ENCODE measurements at regions of chr4 and their contacts with region 1.

Region 1: GRCh38 chr4:149199594-149199993 is 616.0 kb downstream of the IQCM start:
- DNase-seq: no peak

Region 2: DNA sequence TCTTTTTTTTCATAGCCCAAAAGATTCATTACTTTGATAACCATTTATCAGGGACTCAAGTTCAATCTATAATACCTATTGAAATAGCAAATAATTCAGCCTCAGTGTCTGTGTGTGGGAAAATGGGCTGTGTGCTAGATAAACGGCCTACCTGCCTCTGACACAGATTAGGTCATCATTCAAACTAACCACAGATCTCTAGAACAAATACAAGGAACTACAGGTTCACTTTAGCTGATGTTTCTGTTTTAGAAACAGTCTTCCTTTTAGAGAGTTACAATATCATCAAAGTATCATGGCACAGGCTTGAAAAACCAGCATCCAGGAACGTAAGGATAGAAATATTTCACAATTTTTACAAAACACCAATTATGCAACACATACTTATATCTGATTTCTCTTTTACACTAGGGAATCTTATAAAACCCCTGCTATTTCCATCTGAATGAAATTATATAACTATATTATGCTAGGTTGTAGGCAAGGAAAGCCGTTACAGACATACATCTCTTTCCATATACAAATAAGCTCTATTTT is 1325.8 kb after region 1 on chr4:
- intact Hi-C with region 1: loop called in 1 of 2 experiments (anchors 10 kb)
- DNase-seq: no peak